ENCODE measurements at regions of chr1 and their contacts with region 1.

Region 1: DNA sequence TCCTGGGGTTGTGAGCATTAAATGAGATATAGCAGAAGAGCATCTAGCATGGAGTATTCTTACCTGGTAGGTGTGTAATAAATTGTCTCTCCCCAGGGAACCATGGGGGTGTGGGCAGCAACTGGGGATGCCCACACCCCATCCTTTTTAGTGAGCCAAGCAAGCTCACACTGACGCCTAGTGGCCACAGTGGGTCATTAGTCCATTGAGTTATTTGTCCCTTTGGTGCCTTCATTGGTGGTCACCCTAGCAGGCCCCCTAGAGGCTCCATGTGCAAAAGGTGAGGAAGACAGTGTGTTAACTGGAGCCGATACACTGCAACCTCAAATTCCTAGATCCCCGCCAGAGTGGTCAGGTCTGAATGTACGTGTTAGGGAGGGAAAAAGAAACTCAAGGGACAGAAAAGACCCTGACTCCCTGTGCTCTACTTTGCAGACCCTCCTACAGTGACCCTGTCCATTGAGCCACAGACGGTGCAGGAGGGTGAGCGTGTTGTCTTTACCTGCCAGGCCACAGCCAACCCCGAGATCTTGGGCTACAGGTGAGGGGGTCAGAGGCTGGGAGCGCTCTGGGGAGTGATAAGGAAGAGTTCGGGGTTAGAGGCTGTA is 93.3 kb upstream of the CD1D start:
- DNase-seq: peak; percentile 74
- H3K4me3 ChIP-seq: no peak overlapping the region
- H3K27ac ChIP-seq: no peak overlapping the region
- H3K4me1 ChIP-seq: no peaks in the 10 kb centered on the region
- H3K27me3 ChIP-seq: peaks cover 0 to 4% (median 0%) of the 10 kb centered on the region in 7 donors
- CTCF ChIP-seq: peak; percentile 53 to 93 (median 77)
- POLR2A ChIP-seq: no peak

Region 2: DNA sequence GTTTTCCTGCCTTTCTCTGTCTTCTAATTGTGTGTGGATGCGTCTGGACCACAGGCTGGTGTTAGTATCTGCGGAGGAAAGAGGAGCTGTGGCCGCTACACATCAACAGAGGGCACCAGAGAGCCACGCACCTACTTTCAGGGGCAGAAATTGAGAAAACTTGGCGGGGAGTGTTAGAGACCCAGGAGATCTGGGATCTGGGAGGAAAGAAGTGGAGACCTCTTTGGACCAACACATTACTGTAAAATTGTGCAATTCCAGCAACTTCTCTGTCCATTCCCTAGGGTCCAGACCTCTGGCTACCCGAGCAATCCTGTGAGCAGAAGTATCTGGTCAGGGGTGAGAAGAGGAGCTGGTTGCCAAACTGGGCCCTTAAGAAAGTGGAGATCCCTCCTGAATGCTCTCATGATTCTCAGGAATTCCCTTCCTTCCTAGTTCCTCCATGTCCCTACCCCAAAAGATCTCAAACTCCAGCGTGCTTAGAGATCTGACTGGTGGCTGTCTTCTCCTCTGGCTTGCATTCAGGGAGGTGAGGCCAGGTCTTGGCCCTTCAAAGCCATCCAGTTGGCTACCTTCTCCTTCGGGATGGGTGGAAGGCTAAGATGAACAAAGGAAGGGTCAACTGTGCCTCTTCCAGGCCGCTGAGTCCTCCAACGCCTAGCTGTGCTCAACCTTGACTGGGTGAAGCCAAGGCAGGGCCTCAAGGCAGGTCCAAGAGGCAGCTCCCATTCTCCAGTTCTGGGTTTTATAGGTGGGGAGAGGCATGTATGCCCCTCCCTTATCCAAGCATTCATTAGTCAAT is 95.2 kb before region 1 on chr1:
- intact Hi-C with region 1: loop called (anchors 5 kb)
- DNase-seq: no peak
- H3K4me3 ChIP-seq: peak overlapping the region in 1 of 8 donors; percentile 77
- H3K27ac ChIP-seq: peak overlapping the region in 5 of 8 donors; percentile 9 to 83 (median 81)
- H3K4me1 ChIP-seq: peaks cover 0 to 31% (median 19%) of the 10 kb centered on the region in 6 donors
- H3K27me3 ChIP-seq: peaks cover 0 to 50% (median 24%) of the 10 kb centered on the region in 7 donors
- CTCF ChIP-seq: peak; percentile 42 to 92 (median 81)
- POLR2A ChIP-seq: no peak

Region 3: DNA sequence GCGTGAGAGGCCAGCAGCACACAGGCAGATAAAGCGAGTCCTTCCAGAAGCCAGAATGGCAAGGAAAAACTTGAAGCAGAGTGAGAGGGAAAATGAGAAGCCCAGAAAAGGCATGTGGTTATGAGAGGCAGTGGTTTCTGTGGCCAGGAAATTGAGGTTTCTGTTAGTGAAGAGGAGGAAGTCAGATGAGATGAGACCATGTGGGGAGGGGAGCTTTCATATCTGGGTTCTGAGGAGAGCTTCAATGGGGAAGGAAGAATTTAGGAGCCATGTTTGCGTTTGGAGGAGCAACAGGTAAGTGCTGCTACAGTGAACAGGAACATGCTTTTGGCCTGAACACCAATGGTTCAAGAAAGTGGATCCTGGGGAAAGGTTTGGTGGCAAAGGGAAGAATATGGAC is 160.7 kb after region 1 on chr1:
- intact Hi-C with region 1: no loop called
- DNase-seq: no peak
- H3K4me3 ChIP-seq: peak overlapping the region in 1 of 8 donors; percentile 16
- H3K27ac ChIP-seq: peak overlapping the region in 3 of 8 donors; percentile 46 to 61 (median 54)
- H3K4me1 ChIP-seq: peaks cover 14 to 58% (median 34%) of the 10 kb centered on the region in 6 donors
- H3K27me3 ChIP-seq: peaks cover 0 to 4% (median 0%) of the 10 kb centered on the region in 7 donors
- CTCF ChIP-seq: no peak
- POLR2A ChIP-seq: no peak

Measured in spleen (tissue), 13 donors.